Ascending aorta (tissue), 2 donors: ENCODE measurements at regions of chr19 and their contacts with region 1.

Region 1: DNA sequence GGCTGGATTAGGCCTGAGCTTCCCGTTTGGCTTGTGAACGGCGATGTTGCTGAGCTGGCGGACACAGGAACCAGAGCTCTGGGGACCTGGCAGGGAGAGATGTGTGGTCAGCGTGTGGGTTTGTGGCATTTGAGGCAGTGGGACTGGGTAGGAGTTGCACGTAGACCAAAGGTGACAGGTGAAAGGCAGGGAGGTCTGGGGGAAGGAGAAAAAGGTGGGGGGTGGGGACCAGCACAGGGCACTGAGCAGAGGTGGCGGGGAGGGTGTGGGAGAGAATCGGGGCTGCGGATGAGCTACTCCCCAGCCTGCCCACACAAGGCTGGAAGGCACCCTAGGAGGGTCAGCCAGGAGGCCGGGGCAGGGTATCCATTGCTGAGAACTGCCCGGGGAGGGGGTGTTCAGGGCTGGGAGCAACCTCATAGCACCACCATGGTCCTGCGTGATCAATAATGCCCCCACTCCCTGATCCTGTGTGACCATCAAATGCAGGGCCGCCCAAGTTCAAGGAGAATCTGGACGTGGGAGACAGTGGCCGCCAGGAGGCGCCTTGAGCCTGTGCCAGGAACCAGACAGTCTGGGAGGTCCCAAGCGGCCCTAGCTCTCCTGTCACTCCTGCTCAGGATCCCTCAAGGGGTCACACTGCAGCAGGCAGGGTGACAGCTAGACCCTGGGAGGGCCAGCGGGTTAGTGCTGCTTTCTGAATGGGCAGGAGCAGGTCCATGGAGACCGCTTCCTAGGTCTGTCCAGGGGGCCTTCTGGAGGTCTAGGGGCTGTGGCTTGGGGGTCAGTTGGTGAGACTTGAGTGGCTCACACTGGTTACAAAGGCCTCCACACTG is 12.8 kb upstream of the SELENOW start:
- DNase-seq: no peak
- H3K4me3 ChIP-seq: no peak overlapping the region
- H3K27ac ChIP-seq: no peak overlapping the region
- H3K4me1 ChIP-seq: no peaks in the 10 kb centered on the region
- H3K27me3 ChIP-seq: no peaks in the 10 kb centered on the region
- CTCF ChIP-seq: peak; percentile 70 to 75 (median 75)

Region 2: GRCh38 chr19:47790398-47790814 is 24.7 kb after region 1 on chr19:
- intact Hi-C with region 1: loop called (anchors 1 kb)
- DNase-seq: peak in 1 of 2 donors; percentile 89
- H3K4me3 ChIP-seq: no peak overlapping the region
- H3K27ac ChIP-seq: no peak overlapping the region
- H3K4me1 ChIP-seq: peaks cover 3 to 14% of the 10 kb centered on the region in 2 donors
- H3K27me3 ChIP-seq: no peaks in the 10 kb centered on the region
- CTCF ChIP-seq: peak; percentile 72 to 90 (median 90)

Region 3: DNA sequence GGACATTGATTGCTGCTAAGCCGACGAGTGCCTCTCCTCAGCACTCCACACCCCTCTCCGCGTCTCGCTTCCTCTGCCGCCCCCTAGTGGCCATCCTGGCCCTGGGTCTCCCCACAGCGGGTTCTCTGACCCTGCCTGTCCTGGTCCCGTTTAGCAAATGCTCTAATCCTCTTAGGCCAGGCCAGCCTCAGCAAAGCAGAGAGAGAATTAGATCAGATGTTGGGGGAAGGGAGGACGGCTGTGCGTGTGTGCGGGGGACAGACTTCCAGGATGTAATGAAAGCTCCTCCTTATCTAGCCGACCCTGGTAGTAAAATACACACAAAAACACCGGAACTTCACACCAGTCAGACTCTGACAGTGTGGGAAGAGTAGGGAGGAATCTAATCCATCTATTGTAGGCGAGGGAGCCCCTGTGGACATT is 97.8 kb after region 1 on chr19:
- intact Hi-C with region 1: loop called (anchors 5 kb)
- DNase-seq: peak; percentile 18 to 78
- H3K4me3 ChIP-seq: no peak overlapping the region
- H3K27ac ChIP-seq: no peak overlapping the region
- H3K4me1 ChIP-seq: peaks cover 0 to 3% of the 10 kb centered on the region in 2 donors
- H3K27me3 ChIP-seq: no peaks in the 10 kb centered on the region
- CTCF ChIP-seq: peak; percentile 72 to 89 (median 87)